Posterior vena cava (tissue), 2 donors: ENCODE measurements at regions of chr6 and their contacts with region 1.

Region 1: DNA sequence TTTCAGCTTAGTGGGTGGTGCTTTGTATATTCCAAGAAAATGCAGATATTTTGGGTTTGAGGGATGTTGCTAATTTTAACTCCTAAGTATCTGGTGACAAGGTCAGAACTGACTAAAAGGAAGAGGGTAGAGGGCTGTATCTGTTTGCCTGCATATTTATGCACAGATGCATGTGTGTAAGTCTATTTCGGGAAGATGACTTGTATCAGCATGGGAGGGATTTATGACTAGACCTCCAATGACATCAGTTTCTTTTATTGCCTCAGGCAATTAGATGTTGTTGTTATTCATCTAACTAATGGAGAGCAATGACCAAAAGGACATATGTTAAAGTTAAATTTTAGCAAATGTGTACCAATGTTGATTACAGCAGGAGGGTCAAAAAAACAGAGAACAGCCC is 734.3 kb downstream of the QKI start:
- DNase-seq: no peak

Region 2: GRCh38 chr6:164216368-164216767 is 67.6 kb after region 1 on chr6:
- intact Hi-C with region 1: loop called in 1 of 2 experiments (anchors 5 kb)
- DNase-seq: no peak